A673 (cell line): ENCODE measurements at regions of chr6 and their contacts with region 1.

Region 1: DNA sequence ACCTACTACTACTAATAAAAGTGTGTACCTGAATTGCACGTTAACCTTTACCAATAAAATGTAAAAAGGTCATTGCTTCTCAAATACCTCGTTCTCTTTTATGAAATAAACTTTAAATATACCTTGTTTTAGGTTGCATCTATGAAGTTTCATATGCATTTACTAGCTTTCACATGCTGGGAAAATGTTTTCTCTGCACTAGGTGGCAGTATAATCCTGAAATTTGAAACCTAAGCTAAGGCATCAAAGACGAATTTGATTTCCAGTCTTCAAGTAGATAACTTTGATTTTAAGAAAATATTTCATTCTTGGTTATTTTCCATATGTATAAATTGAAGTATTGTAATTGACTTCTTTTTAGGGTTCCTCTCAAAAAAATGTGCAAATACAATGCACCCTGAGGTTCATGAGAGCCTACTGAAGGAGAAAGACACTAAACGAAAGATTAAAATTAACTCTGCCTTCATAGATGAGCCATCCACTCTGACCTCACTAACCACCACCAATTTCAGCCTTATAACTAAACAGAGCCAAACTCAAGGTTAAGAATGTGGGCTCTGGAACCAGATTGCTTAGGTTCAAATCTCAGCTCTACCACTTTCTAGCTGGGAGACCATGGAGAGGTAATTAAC is 7.3 kb upstream of the COL9A1 start:
- DNase-seq: peak; percentile 62
- H3K4me3 ChIP-seq: no peak overlapping the region
- H3K27ac ChIP-seq: no peak overlapping the region
- H3K4me1 ChIP-seq: no peaks in the 10 kb centered on the region
- H3K27me3 ChIP-seq: peaks cover 4% of the 10 kb centered on the region
- CTCF ChIP-seq: peak; percentile 78

Region 2: DNA sequence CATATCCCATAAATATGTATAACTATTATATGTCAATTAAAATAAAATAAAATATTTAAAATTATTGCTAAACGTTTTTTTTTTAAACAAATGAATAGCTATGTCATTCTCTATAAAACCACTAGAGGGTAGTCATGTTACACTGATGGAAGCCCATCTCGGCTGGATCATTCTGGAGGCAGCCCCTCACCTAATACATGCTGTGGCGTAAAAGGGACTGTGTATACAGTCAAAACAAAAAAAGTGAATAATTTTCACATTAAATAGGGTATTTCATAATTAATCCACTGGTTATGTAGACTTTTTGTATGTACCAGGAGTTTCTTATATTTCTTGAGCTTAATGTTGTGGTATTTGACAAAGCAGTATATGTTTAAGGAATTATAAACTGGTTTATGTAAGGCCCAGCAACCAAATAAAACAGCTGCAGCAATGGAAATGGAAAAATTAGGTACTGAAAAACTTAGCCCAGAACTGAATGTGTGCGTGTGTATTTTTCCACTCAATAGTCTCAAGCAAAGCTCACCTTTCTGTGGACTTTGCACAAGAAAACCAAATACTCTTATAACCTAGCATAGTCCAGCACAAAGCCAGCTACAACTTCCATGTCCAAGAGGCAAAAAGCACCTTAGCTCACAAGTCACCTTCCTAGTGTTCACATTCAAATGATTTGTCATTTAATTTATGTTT is 89.0 kb before region 1 on chr6:
- CTCF ChIA-PET with region 1: interaction called, 15 read pairs
- POLR2A ChIA-PET with region 1: no interaction called
- intact Hi-C with region 1: loop called (anchors 1 kb)
- DNase-seq: peak; percentile 59
- H3K4me3 ChIP-seq: no peak overlapping the region
- H3K27ac ChIP-seq: no peak overlapping the region
- H3K4me1 ChIP-seq: no peaks in the 10 kb centered on the region
- H3K27me3 ChIP-seq: peaks cover 20% of the 10 kb centered on the region
- CTCF ChIP-seq: peak; percentile 75

Region 3: GRCh38 chr6:70369332-70369950 is 59.3 kb after region 1 on chr6:
- CTCF ChIA-PET with region 1: interaction called, 52 read pairs
- POLR2A ChIA-PET with region 1: no interaction called
- intact Hi-C with region 1: loop called (anchors 1 kb)
- DNase-seq: peak; percentile 84
- H3K4me3 ChIP-seq: no peak overlapping the region
- H3K27ac ChIP-seq: no peak overlapping the region
- H3K4me1 ChIP-seq: peaks cover 32% of the 10 kb centered on the region
- H3K27me3 ChIP-seq: peaks cover 22% of the 10 kb centered on the region
- CTCF ChIP-seq: peak; percentile 94

Region 4: DNA sequence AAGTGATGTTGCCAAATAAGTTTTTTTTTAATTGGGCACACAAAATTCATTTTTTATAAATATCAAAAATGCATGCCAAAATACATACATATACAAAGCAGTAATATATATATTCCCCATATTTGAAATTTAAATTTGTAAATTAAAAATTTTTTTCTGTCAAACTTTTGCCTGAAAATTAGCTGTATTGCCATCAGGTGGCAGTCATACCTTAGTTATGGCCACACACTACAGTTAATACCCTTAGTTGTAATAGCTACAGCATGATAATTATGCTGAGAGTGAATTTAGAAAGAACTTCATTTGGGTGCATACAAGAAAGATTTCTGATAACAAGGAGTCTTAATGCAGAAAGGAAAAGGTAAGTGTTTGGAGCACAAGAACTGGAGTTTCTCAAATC is 210.4 kb after region 1 on chr6:
- CTCF ChIA-PET with region 1: no interaction called
- POLR2A ChIA-PET with region 1: no interaction called
- intact Hi-C with region 1: loop called (anchors 10 kb)
- DNase-seq: peak; percentile 11
- H3K4me3 ChIP-seq: no peak overlapping the region
- H3K27ac ChIP-seq: no peak overlapping the region
- H3K4me1 ChIP-seq: no peaks in the 10 kb centered on the region
- H3K27me3 ChIP-seq: no peaks in the 10 kb centered on the region
- CTCF ChIP-seq: peak; percentile 48; the same call in 1 of the 2 replicates

Region 5: DNA sequence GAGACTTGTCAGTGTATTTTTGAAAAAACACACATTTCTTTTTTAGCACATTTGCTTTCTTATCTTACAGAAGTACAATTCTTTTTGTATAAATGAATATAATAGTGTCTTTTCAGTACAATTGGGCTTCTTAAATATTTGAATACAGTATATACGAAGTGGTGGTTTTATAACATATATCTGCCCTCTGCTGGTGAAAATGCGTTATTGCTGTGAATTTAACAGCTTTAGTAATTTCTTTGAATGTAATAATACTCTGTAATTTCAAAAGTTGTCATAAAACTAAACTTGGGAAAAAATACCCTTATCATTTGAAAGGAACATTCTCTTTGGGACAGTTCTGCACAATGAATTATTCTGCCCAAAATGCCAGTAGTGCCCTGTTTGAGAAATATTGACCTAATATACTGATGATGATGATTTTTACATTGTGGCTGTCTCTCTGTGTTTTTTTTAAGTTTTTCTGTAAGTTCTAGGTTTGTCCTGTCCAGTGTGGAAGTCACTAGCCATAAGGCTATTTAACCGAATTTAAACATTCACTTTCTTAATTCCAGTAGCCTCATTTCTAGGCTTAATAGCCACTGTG is 376.5 kb after region 1 on chr6:
- CTCF ChIA-PET with region 1: no interaction called
- POLR2A ChIA-PET with region 1: no interaction called
- intact Hi-C with region 1: loop called (anchors 5 kb)
- DNase-seq: peak; percentile 52
- H3K4me3 ChIP-seq: no peak overlapping the region
- H3K27ac ChIP-seq: no peak overlapping the region
- H3K4me1 ChIP-seq: no peaks in the 10 kb centered on the region
- H3K27me3 ChIP-seq: no peaks in the 10 kb centered on the region
- CTCF ChIP-seq: peak; percentile 79

Region 6: DNA sequence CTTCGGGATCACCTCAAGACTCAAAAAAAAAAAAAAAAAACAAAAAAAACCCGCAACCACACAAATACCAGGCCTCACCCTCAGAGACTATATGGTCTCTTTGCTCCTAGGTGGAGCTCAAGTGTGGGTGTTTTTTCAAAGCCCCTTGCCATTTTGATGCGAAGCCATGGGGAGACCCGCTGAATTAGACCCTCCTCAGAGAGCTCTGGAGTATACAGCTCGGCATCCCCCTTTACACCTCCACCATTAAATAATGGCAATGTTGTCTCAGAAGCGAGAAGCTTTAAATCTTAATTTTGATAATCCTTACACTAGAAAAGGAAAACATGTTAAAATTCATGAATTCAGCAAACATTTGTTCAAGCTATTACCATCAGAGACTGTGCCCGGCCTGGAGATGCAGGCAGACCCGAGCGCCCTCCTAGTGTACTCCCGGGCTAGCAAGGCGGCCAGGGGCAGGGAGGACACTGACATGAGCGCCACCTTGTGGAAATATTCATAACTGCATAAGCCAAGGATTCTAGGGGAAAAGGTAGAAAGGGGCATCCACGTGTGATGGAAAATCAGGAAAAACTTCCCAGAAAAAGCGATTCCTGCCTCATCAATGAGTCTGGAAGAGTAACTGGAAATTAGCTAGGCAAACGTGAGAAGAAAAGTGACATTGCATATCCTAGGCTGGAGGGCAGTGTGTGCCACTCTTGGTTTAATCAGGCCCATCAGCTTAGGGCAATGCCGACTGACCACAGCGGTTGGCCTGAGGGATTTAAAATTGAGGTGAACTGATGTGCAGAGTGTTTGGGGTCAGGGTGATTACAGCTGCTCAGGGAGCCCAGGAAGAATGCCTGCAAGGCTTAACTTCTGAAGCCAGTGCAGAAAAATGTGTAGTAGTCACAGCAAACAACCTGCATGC is 574.1 kb after region 1 on chr6:
- CTCF ChIA-PET with region 1: no interaction called
- POLR2A ChIA-PET with region 1: no interaction called
- intact Hi-C with region 1: loop called (anchors 5 kb)
- DNase-seq: peak; percentile 72
- H3K4me3 ChIP-seq: no peak overlapping the region
- H3K27ac ChIP-seq: no peak overlapping the region
- H3K4me1 ChIP-seq: no peaks in the 10 kb centered on the region
- H3K27me3 ChIP-seq: no peaks in the 10 kb centered on the region
- CTCF ChIP-seq: peak; percentile 92

Region 7: GRCh38 chr6:71012866-71013469 is 702.8 kb after region 1 on chr6:
- CTCF ChIA-PET with region 1: no interaction called
- POLR2A ChIA-PET with region 1: no interaction called
- intact Hi-C with region 1: loop called (anchors 2 kb)
- DNase-seq: peak; percentile 70
- H3K4me3 ChIP-seq: no peak overlapping the region
- H3K27ac ChIP-seq: no peak overlapping the region
- H3K4me1 ChIP-seq: no peaks in the 10 kb centered on the region
- H3K27me3 ChIP-seq: no peaks in the 10 kb centered on the region
- CTCF ChIP-seq: peak; percentile 83